T-cell (primary cell): ENCODE measurements at regions of chr3 and their contacts with region 1.

Region 1: DNA sequence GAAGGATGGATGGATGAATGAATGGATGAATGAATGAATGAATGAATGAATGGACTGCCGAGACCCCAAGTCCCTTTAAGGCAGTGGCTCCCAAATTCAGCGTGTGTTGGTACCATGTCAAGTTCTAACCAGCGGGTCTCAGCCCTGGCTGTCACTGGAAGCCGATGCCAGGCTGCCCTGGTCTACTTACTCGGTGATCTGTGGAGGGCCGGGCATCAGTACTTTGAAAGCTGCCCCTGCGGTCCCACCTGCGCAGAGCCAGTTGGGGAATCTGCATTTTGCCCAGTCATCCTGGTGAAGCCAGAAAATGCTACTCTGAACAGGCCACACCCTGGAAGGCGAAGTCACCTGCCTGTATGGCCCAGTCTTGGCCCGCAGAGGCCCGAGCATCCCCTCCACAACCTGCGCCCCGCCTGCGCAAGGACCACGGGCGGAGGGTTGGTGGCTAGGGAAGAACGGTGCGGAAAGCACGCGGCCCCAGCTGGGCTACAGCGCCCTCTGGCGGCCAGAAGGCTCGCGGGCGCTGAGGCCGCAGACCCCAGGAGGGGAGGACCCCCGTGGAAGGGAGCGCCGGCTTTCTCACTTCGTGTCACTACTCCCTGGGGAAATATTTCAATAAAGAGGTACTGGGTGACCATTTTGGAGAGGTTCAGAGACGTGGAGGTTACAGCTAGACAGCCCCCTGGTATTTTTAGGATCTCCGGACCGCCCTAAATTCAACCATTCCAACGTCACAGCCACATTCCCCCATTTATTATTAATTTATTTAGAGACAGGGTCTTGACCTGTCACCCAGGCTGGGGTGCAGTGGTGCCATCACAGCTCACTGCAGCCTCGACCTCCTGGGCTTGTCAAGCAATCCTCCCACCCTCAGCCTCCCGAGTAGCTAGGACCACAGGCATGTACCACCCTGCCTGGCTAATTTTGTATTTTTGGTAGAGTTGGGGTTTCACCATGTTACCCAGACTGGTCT is 34.9 kb downstream of the PRKCD start:
- DNase-seq: peak in 32 of 35 experiments; percentile 19 to 78 (median 42)
- ATAC-seq: peak; percentile 69 to 77 (median 74)
- H3K4me3 ChIP-seq: no peak overlapping the region
- H3K4me3 Mint-ChIP-seq: peak overlapping the region in 1 of 3 donors; percentile 1
- H3K27ac ChIP-seq: no peak overlapping the region
- H3K27ac Mint-ChIP-seq: no peak overlapping the region
- H3K4me1 ChIP-seq: peaks cover 0 to 8% of the 10 kb centered on the region in 2 experiments
- H3K4me1 Mint-ChIP-seq: peaks cover 4 to 8% (median 7%) of the 10 kb centered on the region in 3 donors
- H3K27me3 ChIP-seq: peaks cover 0 to 12% of the 10 kb centered on the region in 2 experiments
- H3K27me3 Mint-ChIP-seq: no peaks in the 10 kb centered on the region

Region 2: GRCh38 chr3:52907497-52907896 is 288.4 kb before region 1 on chr3:
- CTCF ChIA-PET with region 1: no interaction called
- POLR2A ChIA-PET with region 1: no interaction called
- DNase-seq: no peak
- ATAC-seq: no peak
- H3K4me3 ChIP-seq: no peak overlapping the region
- H3K4me3 Mint-ChIP-seq: no peak overlapping the region
- H3K27ac ChIP-seq: no peak overlapping the region
- H3K27ac Mint-ChIP-seq: no peak overlapping the region
- H3K4me1 ChIP-seq: no peaks in the 10 kb centered on the region
- H3K4me1 Mint-ChIP-seq: no peaks in the 10 kb centered on the region
- H3K27me3 ChIP-seq: no peaks in the 10 kb centered on the region
- H3K27me3 Mint-ChIP-seq: no peaks in the 10 kb centered on the region

Region 3: DNA sequence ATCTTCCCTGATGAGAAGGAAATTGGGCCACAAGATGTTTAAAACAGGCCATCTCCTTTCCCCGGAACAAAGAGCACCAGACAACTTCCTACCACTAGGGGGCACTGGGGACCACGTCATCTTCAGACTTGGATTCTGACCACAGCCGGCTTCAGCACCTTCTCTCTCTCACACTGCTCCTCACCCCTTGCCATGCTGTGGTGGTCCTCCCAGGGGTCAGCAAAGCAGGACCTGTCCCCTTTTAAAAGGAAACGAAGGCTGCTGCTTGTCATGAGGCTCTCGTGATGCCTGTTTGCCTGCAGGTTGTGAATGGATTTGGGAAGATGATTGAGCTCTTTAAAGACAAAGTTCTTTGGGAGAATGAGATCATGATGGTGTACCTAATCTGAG is 81.9 kb before region 1 on chr3:
- CTCF ChIA-PET with region 1: interaction called, 19 to 40 read pairs
- POLR2A ChIA-PET with region 1: no interaction called
- DNase-seq: peak; percentile 57 to 91 (median 76)
- ATAC-seq: peak; percentile 80 to 90 (median 83)
- H3K4me3 ChIP-seq: no peak overlapping the region
- H3K4me3 Mint-ChIP-seq: no peak overlapping the region
- H3K27ac ChIP-seq: no peak overlapping the region
- H3K27ac Mint-ChIP-seq: no peak overlapping the region
- H3K4me1 ChIP-seq: peaks cover 3 to 9% of the 10 kb centered on the region in 2 experiments
- H3K4me1 Mint-ChIP-seq: peaks cover 8 to 15% (median 9%) of the 10 kb centered on the region in 3 donors
- H3K27me3 ChIP-seq: no peaks in the 10 kb centered on the region
- H3K27me3 Mint-ChIP-seq: no peaks in the 10 kb centered on the region

Region 4: DNA sequence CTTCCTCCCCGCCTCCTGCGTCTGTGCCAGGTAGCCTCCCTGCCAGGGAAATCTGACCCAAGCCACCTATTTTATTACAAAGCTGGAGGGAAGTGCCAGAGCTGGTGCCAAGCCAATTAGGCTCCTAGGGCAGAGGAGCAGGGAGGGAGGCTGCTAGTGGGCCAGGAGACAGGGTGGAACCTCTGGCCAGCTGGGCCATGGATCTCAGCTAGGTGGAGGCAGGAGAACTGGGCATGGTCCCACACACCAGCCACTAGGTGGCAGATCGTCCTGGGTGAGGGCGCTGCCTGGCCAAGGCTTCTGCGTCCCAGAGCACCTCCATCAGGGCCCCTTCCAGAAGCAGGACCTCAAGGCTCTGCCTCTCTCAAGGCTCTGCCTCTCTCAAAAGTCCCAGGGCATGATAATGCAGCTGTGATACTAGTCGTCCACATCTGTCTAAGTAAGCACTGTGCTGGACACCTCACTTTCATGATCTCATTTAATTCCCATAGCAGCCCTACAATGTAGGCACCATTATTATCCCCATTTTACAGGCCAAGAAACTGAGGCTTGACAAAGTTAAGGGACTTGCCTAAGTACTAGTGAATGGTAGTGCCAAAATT is 61.2 kb before region 1 on chr3:
- CTCF ChIA-PET with region 1: interaction called in 1 of 2 experiments, 12 read pairs
- POLR2A ChIA-PET with region 1: no interaction called
- DNase-seq: peak in 33 of 35 experiments; percentile 18 to 72 (median 45)
- ATAC-seq: peak; percentile 27 to 49 (median 31)
- H3K4me3 ChIP-seq: no peak overlapping the region
- H3K4me3 Mint-ChIP-seq: no peak overlapping the region
- H3K27ac ChIP-seq: no peak overlapping the region
- H3K27ac Mint-ChIP-seq: no peak overlapping the region
- H3K4me1 ChIP-seq: peaks cover 3 to 13% of the 10 kb centered on the region in 2 experiments
- H3K4me1 Mint-ChIP-seq: peaks cover 15 to 20% (median 18%) of the 10 kb centered on the region in 3 donors
- H3K27me3 ChIP-seq: no peaks in the 10 kb centered on the region
- H3K27me3 Mint-ChIP-seq: no peaks in the 10 kb centered on the region

Region 5: DNA sequence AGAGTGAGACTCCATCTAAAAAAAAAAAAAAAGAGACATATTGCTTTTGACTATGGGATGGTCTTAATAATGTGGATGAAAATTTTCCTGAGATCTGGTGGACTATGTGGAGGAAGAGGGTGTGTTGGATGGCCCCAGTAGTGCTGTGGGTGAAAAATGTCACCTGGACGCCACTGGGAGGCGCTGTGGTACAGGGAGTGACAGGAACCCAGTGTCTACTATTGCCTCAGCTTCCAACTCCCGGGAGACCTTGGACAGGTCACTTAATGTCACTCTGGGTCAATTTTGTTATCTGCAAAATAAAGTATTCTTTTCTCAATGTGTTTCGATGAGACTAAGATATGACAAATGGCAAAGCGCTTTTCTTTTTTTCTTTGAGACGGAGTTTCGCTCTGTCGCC is 179.1 kb after region 1 on chr3:
- CTCF ChIA-PET with region 1: no interaction called
- POLR2A ChIA-PET with region 1: interaction called in 1 of 2 experiments, 10 read pairs
- DNase-seq: peak in 23 of 35 experiments; percentile 1 to 52 (median 16)
- ATAC-seq: no peak
- H3K4me3 ChIP-seq: no peak overlapping the region
- H3K4me3 Mint-ChIP-seq: no peak overlapping the region
- H3K27ac ChIP-seq: no peak overlapping the region
- H3K27ac Mint-ChIP-seq: no peak overlapping the region
- H3K4me1 ChIP-seq: no peaks in the 10 kb centered on the region
- H3K4me1 Mint-ChIP-seq: no peaks in the 10 kb centered on the region
- H3K27me3 ChIP-seq: peaks cover 0 to 19% of the 10 kb centered on the region in 2 experiments
- H3K27me3 Mint-ChIP-seq: peaks cover 26 to 32% of the 10 kb centered on the region in 2 donors